Gastrocnemius medialis (tissue), 4 donors: ENCODE measurements at regions of chr3 and their contacts with region 1.

Region 1: DNA sequence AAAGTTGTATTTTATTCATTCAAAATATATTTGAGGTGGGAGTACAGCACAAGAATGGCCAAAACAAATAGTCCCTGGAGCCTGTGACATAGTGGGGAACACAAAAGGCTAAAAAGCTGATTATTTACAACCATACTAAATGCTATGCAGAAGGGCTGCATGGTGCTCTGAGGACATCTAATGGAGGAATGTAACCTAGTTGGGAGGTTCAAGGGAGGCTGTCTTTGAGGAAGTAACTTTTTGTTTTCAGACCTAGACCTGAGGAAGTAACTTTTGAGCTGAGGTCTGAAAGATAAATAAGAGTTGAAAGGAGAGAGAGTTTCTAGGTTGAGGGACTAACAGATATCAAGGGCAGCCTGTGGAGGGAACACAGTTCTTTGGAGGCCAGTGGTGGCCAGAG is 34.8 kb upstream of the RASA2 start:
- DNase-seq: no peak
- ATAC-seq: peak; percentile 30 to 37
- H3K4me3 ChIP-seq: no peak overlapping the region
- H3K27ac ChIP-seq: no peak overlapping the region
- H3K4me1 ChIP-seq: peaks cover 4 to 7% of the 10 kb centered on the region in 2 donors
- H3K27me3 ChIP-seq: no peaks in the 10 kb centered on the region
- CTCF ChIP-seq: peak; percentile 39 to 74 (median 48)
- POLR2A ChIP-seq: no peak

Region 2: DNA sequence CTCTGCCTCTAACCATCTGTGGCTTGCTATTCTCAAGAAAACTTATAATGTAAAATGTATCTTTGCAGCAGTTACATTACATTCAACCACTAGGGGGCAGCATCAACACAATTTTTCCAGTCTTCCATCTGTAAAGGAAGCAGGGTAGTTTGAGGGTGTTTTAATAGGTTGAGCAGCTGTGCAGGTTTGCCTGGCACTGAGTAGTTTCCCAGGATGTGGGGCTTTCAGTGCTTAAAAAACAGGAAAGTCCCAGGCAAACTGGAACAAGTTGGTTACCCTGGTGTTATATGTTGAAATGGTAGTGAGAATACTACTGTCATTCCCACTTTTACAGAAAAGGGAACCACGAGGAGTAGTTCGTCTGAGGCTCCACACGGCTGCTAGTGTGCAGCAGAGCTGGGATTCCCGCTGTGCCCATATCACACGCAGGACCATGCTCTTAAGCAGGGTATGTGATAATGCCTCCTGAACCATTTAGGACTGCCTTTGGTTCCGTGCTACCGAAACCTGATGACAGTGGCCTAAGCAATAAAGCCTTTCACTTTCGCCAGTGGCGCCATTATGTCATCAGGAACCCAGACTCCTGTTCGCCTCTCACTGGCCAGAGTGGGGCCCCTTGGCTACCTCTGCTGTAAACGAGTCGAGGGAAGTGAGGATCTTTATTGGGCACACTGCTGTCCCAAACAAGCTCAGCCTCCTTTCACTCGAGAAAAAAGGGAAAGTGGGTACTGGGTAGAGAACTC is 148.4 kb before region 1 on chr3:
- in situ Hi-C with region 1: loop called (anchors 5 to 10 kb)
- intact Hi-C with region 1: no loop called
- DNase-seq: no peak
- ATAC-seq: peak; percentile 78 to 85
- H3K4me3 ChIP-seq: no peak overlapping the region
- H3K27ac ChIP-seq: no peak overlapping the region
- H3K4me1 ChIP-seq: no peaks in the 10 kb centered on the region
- H3K27me3 ChIP-seq: no peaks in the 10 kb centered on the region
- CTCF ChIP-seq: peak; percentile 61 to 87 (median 69)
- POLR2A ChIP-seq: no peak

Region 3: GRCh38 chr3:141311496-141312353 is 140.3 kb before region 1 on chr3:
- in situ Hi-C with region 1: loop called (anchors 5 to 10 kb)
- intact Hi-C with region 1: loop called (anchors 2 kb)
- DNase-seq: peak; percentile 96 to 97
- ATAC-seq: peak; percentile 99 to 100
- H3K4me3 ChIP-seq: peak overlapping the region; percentile 65 to 80 (median 70)
- H3K27ac ChIP-seq: peak overlapping the region; percentile 81 to 83 (median 82)
- H3K4me1 ChIP-seq: peaks cover 4 to 10% of the 10 kb centered on the region in 2 donors
- H3K27me3 ChIP-seq: no peaks in the 10 kb centered on the region
- CTCF ChIP-seq: peak; percentile 59 to 81 (median 75)
- POLR2A ChIP-seq: peak; percentile 38 to 39

Region 4: GRCh38 chr3:141353652-141354495 is 98.2 kb before region 1 on chr3:
- in situ Hi-C with region 1: loop called in 1 of 4 experiments (anchors 10 kb)
- intact Hi-C with region 1: no loop called
- DNase-seq: no peak
- ATAC-seq: no peak
- H3K4me3 ChIP-seq: no peak overlapping the region
- H3K27ac ChIP-seq: no peak overlapping the region
- H3K4me1 ChIP-seq: no peaks in the 10 kb centered on the region
- H3K27me3 ChIP-seq: no peaks in the 10 kb centered on the region
- CTCF ChIP-seq: no peak
- POLR2A ChIP-seq: no peak

Region 5: GRCh38 chr3:141360888-141361598 is 91.0 kb before region 1 on chr3:
- in situ Hi-C with region 1: loop called (anchors 5 to 10 kb)
- intact Hi-C with region 1: loop called (anchors 1 kb)
- DNase-seq: no peak
- ATAC-seq: peak; percentile 91 to 96
- H3K4me3 ChIP-seq: peak overlapping the region in 3 of 4 donors; percentile 38 to 40 (median 40)
- H3K27ac ChIP-seq: peak overlapping the region; percentile 53 to 71 (median 63)
- H3K4me1 ChIP-seq: peaks cover 7 to 10% of the 10 kb centered on the region in 2 donors
- H3K27me3 ChIP-seq: no peaks in the 10 kb centered on the region
- CTCF ChIP-seq: peak; percentile 73 to 91 (median 77)
- POLR2A ChIP-seq: no peak